ENCODE measurements at regions of chr18 and their contacts with region 1.

Region 1: DNA sequence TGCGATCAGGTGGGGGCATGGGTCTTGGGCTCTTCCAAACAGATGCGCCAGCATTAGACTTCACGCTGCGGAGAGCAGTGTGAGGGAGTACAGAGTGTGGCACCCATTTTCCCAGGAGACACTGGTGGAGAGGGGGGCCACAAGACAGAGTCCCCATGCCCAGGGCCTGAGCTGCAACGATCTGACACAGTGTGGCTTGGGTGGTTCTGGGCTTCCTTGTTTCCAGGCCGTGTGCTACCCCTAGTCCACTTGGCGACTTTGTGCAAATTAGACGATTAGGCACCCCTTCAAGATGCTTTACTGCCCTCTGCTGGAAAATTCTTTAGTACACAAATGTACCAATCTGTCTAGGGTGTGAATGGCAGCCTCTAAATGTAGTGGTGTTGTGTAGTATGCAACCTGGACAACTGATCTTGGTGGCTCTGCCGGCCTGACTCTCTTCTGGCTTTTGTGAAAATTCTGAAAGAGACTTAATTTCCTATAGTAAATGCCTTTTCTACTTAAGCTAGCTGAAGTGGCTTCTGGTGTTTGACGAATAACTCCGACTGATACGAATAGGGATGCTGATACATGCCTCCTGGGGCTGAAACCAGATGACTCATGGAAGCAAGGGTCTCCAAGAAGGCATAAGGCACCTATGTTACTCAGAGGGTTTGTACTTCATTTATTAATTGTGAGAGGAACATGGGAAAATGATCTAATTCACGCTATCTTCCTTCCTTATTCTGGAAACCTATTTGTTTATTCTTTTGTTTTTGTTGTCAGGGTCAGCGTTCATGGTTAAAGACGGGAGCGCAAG is 92.3 kb upstream of the SMAD2 start:
- DNase-seq: peak; percentile 78
- H3K4me3 Mint-ChIP-seq: no peak overlapping the region
- H3K27ac Mint-ChIP-seq: no peak overlapping the region
- H3K4me1 Mint-ChIP-seq: peaks cover 7% of the 10 kb centered on the region
- H3K27me3 Mint-ChIP-seq: peaks cover 19% of the 10 kb centered on the region

Region 2: GRCh38 chr18:47772374-47773248 is 250.1 kb before region 1 on chr18:
- intact Hi-C with region 1: loop called (anchors 1 kb)
- DNase-seq: peak; percentile 91
- H3K4me3 Mint-ChIP-seq: no peak overlapping the region
- H3K27ac Mint-ChIP-seq: no peak overlapping the region
- H3K4me1 Mint-ChIP-seq: peaks cover 5% of the 10 kb centered on the region
- H3K27me3 Mint-ChIP-seq: peaks cover 5% of the 10 kb centered on the region